Dorsolateral prefrontal cortex (tissue), 120 donors: ENCODE measurements at regions of chr16 and their contacts with region 1.

Region 1: DNA sequence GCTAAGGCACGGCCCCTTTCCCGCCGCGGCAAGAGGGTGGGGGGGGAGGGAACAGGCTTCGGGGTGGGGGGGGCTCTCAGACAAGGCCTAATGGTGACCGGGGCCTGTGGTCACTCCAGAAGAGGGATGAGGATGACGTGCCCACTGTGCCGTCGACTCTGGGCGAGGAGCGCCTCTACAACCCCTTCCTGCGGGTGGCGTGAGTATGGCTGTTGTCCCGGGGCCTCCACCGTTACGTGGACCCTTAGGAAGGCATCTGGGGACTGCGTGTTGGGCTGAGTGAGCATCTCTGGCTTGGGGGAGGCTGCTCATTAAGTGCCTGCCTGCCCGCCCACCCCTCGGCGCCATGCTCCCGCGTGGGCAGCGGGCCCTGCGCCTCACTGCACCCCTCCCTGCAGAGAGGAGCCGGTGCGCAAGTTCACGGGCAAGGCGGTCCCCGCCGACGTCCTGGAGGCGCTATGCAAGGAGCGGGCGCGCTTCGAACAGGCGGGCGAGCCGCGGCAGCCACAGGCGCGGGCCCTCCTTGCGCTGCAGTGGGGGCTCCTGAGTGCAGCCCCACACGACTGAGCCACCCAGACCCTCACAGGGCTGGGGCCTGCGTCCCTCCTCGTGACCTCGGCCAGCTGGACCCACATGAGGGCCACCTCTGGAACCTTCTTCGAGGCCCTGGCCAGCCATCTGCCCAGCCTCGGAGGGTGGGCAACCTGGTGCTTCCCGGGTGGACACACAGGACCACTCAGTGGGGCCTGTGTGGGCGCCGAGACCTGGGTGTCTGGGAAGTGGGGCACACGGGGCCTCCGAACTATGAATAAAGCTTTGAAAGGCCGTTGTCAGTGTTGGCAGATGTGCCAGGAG is 2.2 kb downstream of the HAGHL start:
- DNase-seq: peak in 2 of 10 donors; percentile 48 to 69
- H3K4me3 ChIP-seq: peak overlapping the region in 36 of 59 donors; percentile 9 to 83 (median 73)
- H3K27ac ChIP-seq: peak overlapping the region in 52 of 59 donors; percentile 9 to 98 (median 80)
- H3K27me3 ChIP-seq: no peaks in the 10 kb centered on the region
- CTCF ChIP-seq: no peak

Region 2: GRCh38 chr16:693766-694165 is 35.4 kb before region 1 on chr16:
- intact Hi-C with region 1: loop called in 1 of 2 experiments (anchors 1 kb)
- DNase-seq: no peak
- H3K4me3 ChIP-seq: peak overlapping the region in 2 of 59 donors; percentile 1 to 27
- H3K27ac ChIP-seq: peak overlapping the region in 8 of 59 donors; percentile 13 to 80 (median 26)
- H3K27me3 ChIP-seq: peaks cover 0 to 26% (median 0%) of the 10 kb centered on the region in 45 donors
- CTCF ChIP-seq: no peak